MCF 10A (cell line): ENCODE measurements at regions of chr6 and their contacts with region 1.

Region 1: DNA sequence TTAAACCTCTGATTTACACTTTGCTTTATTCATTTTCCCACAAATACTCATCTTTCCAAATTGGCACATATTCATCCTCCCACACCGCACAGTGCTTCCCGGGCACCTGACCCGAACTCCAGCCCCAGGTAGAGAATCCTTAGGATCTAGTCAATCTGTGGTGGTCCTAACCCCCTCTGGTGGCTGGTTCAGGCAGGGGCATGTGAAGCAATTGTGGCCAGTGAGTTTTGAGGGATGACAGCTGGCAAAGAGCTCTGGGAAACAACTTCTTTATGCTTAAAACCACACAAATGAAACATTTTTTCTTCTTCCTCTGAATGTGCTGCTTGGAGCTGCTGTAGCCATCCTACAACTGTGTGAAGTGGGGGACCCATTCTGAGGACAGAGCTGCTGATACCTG is 54.7 kb downstream of the ELOVL5 start:
- DNase-seq: no peak
- H3K4me3 Mint-ChIP-seq: no peak overlapping the region
- H3K27ac Mint-ChIP-seq: no peak overlapping the region
- H3K4me1 Mint-ChIP-seq: peaks cover 5% of the 10 kb centered on the region
- H3K27me3 Mint-ChIP-seq: no peaks in the 10 kb centered on the region
- CTCF ChIP-seq: peak; percentile 39

Region 2: DNA sequence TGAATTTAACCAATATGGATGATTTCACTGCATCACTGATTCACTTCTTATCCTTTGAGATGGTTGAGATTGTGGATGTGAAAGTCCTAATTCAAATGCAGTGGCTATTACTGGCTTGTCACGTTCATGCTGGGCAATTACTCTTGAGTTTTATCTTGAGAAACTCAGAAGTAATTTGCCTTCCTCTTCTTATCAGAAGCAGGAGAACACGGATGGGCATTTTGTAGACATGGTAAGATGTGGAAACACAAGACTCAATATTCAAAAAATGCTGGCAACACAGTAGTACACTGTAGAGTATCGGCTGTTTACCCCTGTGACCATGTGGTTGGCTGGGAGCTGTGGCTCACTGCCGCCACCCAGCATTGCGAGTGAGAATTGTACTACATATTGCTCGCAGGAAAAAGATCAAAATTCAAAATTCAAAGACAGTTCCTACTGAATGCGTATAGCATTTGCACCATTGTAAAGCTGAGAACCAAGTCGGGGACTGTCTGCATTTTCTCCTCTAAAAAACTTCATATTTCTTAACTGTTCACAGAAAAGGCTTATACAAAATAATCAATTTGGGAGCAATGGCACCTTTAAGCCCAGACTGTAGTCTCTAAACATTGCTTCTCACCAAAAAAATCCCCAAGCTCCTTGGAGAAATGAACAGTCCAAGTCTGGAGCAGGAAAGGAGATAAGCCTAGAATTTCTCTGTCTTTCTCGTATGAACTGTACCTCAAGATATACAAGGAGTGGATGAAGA is 116.6 kb after region 1 on chr6:
- CTCF ChIA-PET with region 1: no interaction called
- POLR2A ChIA-PET with region 1: no interaction called
- intact Hi-C with region 1: loop called (anchors 5 kb)
- DNase-seq: peak; percentile 64
- H3K4me3 Mint-ChIP-seq: no peak overlapping the region
- H3K27ac Mint-ChIP-seq: no peak overlapping the region
- H3K4me1 Mint-ChIP-seq: no peaks in the 10 kb centered on the region
- H3K27me3 Mint-ChIP-seq: no peaks in the 10 kb centered on the region
- CTCF ChIP-seq: peak; percentile 49